ENCODE measurements at regions of chr2 and their contacts with region 1.

Region 1: DNA sequence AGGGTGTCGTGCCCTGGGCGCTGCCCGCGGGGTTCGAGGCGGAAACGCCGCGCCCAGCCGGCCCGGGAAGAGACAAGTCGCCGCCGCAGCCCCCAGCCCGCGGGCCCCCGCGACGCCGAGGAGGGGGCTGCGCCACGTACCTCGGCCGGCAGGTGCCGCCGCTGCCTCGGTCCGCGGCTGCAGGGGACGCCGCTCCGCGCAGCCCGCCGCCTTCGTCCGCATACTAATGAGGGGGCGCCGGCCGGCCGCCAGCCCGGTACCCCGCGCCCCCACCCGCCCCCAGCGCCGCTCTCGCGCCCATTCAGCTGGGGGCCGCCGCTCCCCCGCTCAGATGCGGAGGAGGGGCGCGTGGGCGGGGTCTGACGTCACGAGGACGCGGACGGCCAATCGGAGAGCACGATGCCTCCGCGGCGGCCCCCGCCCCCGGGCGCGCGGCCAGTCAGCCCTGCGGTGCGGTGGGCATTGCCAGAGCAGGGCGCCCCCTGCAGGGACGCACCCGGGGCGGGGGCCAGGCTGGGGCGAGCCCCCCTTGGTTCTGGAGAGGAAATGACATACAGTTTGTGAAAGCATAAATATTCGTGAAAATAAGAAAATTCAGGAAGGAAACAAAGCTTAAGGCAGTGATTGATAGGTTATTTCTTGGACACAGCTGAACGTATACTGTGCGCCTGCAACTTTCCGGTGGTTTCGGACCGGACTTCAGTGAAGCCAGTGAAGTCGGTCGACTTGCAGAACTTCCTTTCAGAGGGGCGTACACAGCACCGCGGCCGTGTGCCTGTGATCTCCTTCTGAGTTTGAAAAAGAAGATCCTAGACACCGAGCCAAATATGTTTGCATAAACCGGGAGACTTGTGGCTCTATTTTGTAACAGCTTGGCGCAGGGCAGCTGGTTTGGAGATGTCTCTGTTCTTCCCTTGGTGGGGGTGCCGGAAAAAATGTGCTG is at the start of gene ST3GAL5:
- DNase-seq: peak; percentile 95
- H3K4me3 ChIP-seq: peak within 1 kb of the TSS; percentile 51 to 85 (median 82)
- H3K27ac ChIP-seq: peak within 1 kb of the TSS; percentile 88 to 98 (median 97)
- H3K4me1 ChIP-seq: peaks cover 55 to 75% of the 10 kb centered on the region in 2 donors
- H3K27me3 ChIP-seq: no peaks in the 10 kb centered on the region
- CTCF ChIP-seq: peak; percentile 34 to 82 (median 64)
- POLR2A ChIP-seq: peak; percentile 39 to 94
- total RNA-seq, gene ST3GAL5: 139 to 199 (median 156) TPM

Region 2: GRCh38 chr2:85635636-85636035 is 253.3 kb before region 1 on chr2:
- intact Hi-C with region 1: no loop called
- DNase-seq: no peak
- H3K4me3 ChIP-seq: no peak overlapping the region
- H3K27ac ChIP-seq: no peak overlapping the region
- H3K4me1 ChIP-seq: peaks cover 0 to 6% of the 10 kb centered on the region in 2 donors
- H3K27me3 ChIP-seq: no peaks in the 10 kb centered on the region
- CTCF ChIP-seq: no peak
- POLR2A ChIP-seq: no peak

Region 3: DNA sequence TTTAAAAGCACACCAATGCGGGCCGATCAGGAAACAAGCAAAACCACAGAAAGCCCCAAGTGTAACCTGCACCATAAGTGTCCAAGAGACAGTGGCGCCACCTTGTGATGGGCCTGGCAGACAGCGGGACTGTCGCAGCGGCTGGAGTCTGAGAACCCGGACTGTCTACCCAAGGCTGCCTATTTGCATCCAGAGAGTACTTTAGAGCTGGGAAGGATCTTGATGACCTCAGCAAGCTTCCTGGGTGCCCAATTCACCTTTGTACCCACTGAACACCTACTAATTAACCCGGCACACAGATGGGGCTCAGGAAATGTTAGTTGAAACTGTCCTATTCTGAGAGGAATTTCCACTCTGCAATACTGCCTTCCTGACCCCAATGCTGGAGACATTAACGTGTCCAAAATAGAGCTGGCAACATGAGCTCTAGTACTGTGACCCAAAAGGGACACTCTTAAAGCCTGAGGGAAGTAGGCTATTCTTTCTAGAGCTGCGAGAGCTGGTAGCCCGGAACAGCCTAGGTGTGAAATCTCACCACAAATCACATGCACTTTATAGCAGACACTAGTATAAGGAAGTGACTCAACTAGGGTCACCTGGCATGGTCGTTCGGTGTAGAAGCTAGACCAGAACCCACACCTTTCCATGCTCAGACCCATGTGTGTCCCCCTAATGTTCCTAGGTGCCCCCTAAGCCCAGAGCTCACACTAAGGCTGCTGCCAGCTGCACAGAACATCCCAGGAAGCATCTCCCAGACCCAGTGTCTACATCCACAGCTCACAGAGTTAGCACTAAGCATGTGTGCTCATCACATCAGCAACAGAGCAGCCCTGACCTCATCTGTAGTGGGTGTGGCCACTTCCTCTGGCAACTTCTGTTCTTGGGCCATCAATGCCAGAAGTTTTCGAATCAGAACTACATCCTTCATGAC is 191.3 kb after region 1 on chr2:
- intact Hi-C with region 1: loop called (anchors 5 kb)
- DNase-seq: peak; percentile 82 to 87
- H3K4me3 ChIP-seq: no peak overlapping the region
- H3K27ac ChIP-seq: peak overlapping the region in 1 of 3 donors; percentile 31
- H3K4me1 ChIP-seq: peaks cover 16 to 30% of the 10 kb centered on the region in 2 donors
- H3K27me3 ChIP-seq: no peaks in the 10 kb centered on the region
- CTCF ChIP-seq: peak; percentile 74 to 85 (median 80)
- POLR2A ChIP-seq: no peak

Measured in thyroid gland (tissue), 4 donors.